Activated naive CD4-positive, alpha-beta T cell treated with anti-CD3 and anti-CD28 coated beads for 36 hours (primary cell): ENCODE measurements at regions of chr9 and their contacts with region 1.

Region 1: GRCh38 chr9:21110708-21111576 is 30.7 kb downstream of the IFNW1 start:
- DNase-seq: peak; percentile 20
- H3K4me3 Mint-ChIP-seq: no peak overlapping the region
- H3K27ac Mint-ChIP-seq: no peak overlapping the region
- H3K4me1 Mint-ChIP-seq: no peaks in the 10 kb centered on the region
- H3K27me3 Mint-ChIP-seq: no peaks in the 10 kb centered on the region

Region 2: DNA sequence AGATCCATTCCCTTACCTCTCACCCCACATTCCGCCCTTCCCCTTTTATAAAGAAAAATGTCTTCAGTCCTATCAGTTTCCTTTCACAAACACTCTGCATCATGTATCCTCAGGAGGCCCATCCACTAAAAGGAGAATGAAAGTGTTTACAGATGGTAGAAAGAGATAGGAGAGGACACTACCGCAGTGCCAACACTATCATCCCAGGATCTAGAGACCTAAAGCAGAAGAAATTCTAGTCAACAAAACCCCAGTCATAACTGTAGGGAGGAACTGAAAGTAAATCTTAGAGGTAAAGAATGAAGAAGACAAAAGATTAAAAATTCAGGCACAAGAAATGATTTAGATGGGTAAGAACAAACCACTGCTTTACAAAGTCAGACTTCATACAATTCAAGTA is 602.7 kb before region 1 on chr9:
- CTCF ChIA-PET with region 1: no interaction called
- intact Hi-C with region 1: no loop called
- DNase-seq: no peak
- H3K4me3 Mint-ChIP-seq: peak overlapping the region; percentile 40
- H3K27ac Mint-ChIP-seq: peak overlapping the region; percentile 13
- H3K4me1 Mint-ChIP-seq: peaks cover 80% of the 10 kb centered on the region
- H3K27me3 Mint-ChIP-seq: no peaks in the 10 kb centered on the region

Region 3: GRCh38 chr9:20884985-20885593 is 225.9 kb before region 1 on chr9:
- CTCF ChIA-PET with region 1: interaction called, 26 read pairs
- intact Hi-C with region 1: loop called (anchors 1 kb)
- DNase-seq: peak; percentile 78
- H3K4me3 Mint-ChIP-seq: no peak overlapping the region
- H3K27ac Mint-ChIP-seq: no peak overlapping the region
- H3K4me1 Mint-ChIP-seq: no peaks in the 10 kb centered on the region
- H3K27me3 Mint-ChIP-seq: no peaks in the 10 kb centered on the region

Region 4: DNA sequence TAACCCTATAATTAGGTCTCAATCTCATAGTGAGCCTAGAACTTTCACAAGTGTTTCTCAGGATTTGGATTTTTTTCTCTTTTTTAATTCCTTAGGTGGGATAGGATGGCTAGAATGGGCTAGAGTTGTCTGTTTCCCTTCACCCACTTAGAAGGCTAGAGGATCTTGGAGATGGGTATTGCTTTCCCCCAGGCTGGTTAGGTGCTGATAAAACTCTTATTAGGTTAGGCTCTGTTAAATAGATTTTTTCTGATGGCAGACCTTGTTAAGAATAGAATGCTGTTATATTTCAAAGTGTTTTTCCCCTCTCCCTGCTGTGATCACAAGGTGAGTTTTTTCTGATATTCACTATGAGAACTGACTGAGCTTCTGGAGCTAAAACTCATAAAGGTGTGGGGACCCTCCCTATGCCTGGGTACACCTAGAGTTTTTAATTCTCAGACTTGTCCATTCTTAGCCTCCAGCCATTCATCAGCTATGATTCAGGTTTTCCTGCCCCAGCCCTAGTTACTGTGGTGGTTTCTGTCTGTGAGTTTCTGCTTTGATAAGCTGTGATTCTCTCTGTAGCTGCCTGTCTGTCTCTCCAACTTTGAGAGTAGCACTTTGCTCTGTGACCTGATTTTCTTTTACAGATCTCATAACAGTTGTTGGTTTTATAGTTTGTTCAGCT is 211.9 kb before region 1 on chr9:
- CTCF ChIA-PET with region 1: interaction called, 3 read pairs
- intact Hi-C with region 1: loop called (anchors 5 kb)
- DNase-seq: peak; percentile 31
- H3K4me3 Mint-ChIP-seq: no peak overlapping the region
- H3K27ac Mint-ChIP-seq: no peak overlapping the region
- H3K4me1 Mint-ChIP-seq: peaks cover 4% of the 10 kb centered on the region
- H3K27me3 Mint-ChIP-seq: no peaks in the 10 kb centered on the region

Region 5: GRCh38 chr9:21078717-21079116 is 32.2 kb before region 1 on chr9:
- CTCF ChIA-PET with region 1: interaction called, 57 read pairs
- intact Hi-C with region 1: loop called (anchors 1 kb)
- DNase-seq: no peak
- H3K4me3 Mint-ChIP-seq: no peak overlapping the region
- H3K27ac Mint-ChIP-seq: peak overlapping the region; percentile 37
- H3K4me1 Mint-ChIP-seq: peaks cover 27% of the 10 kb centered on the region
- H3K27me3 Mint-ChIP-seq: no peaks in the 10 kb centered on the region

Region 6: GRCh38 chr9:21096172-21096900 is 14.6 kb before region 1 on chr9:
- CTCF ChIA-PET with region 1: interaction called, 10 read pairs
- intact Hi-C with region 1: no loop called
- DNase-seq: peak; percentile 67
- H3K4me3 Mint-ChIP-seq: peak overlapping the region; percentile 76
- H3K27ac Mint-ChIP-seq: peak overlapping the region; percentile 94
- H3K4me1 Mint-ChIP-seq: peaks cover 39% of the 10 kb centered on the region
- H3K27me3 Mint-ChIP-seq: no peaks in the 10 kb centered on the region